IMR-90 (cell line): ENCODE measurements at regions of chr12 and their contacts with region 1.

Region 1: DNA sequence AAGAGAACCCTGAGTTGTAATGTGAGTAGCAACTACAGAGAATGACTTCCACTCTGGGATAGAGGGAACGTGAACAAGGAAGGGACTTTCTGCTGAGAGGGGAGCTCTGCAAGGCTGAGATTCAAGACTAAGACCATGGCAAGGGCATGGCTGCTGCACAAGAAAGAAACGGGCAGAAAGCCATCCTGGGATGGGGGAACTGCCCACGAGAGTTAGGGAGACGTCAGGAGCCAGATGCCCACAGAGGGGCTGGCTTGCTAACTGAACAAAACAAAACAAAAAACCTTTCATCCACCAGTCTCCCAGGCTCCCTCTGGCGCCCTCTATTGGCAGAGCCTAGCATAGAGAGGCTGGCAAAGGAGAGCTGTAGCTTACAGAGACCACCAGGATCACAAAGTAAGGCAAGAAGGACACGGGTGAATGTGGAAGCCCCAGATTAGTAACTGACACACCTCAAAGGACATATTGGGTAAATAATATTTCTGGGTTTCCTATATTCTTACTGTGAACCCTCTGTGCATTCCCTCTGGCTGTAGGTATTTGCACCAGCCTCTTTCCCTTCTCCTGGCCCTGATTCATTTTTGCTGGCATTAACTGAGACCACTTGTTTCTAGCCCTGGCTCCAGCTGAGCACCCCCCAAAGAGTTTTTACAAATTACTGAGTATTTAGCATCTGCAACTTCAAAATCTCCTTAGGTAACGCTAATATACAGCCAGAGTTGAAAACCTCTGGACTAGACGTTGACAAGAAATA is 338.3 kb downstream of the EMP1 start:
- DNase-seq: peak; percentile 23
- ATAC-seq: peak; percentile 82
- H3K4me3 ChIP-seq: peak overlapping the region; percentile 25
- H3K27ac ChIP-seq: no peak overlapping the region
- H3K4me1 ChIP-seq: no peaks in the 10 kb centered on the region
- H3K27me3 ChIP-seq: no peaks in the 10 kb centered on the region
- CTCF ChIP-seq: peak; percentile 76
- POLR2A ChIP-seq: no peak
- RAD21 ChIP-seq: peak; percentile 60

Region 2: GRCh38 chr12:12916135-12916944 is 618.5 kb before region 1 on chr12:
- CTCF ChIA-PET with region 1: no interaction called
- POLR2A ChIA-PET with region 1: no interaction called
- dilution Hi-C with region 1: no loop called
- in situ Hi-C with region 1: loop called (anchors 25 kb)
- intact Hi-C with region 1: no loop called
- DNase-seq: peak; percentile 73
- ATAC-seq: peak; percentile 91
- H3K4me3 ChIP-seq: no peak overlapping the region
- H3K27ac ChIP-seq: no peak overlapping the region
- H3K4me1 ChIP-seq: peaks cover 10% of the 10 kb centered on the region
- H3K27me3 ChIP-seq: no peaks in the 10 kb centered on the region
- CTCF ChIP-seq: peak; percentile 95
- POLR2A ChIP-seq: peak; percentile 56
- RAD21 ChIP-seq: peak; percentile 97

Region 3: GRCh38 chr12:13023811-13024530 is 510.9 kb before region 1 on chr12:
- CTCF ChIA-PET with region 1: no interaction called
- POLR2A ChIA-PET with region 1: no interaction called
- dilution Hi-C with region 1: no loop called
- in situ Hi-C with region 1: loop called (anchors 25 kb)
- intact Hi-C with region 1: loop called (anchors 5 kb)
- DNase-seq: peak; percentile 82
- ATAC-seq: peak; percentile 94
- H3K4me3 ChIP-seq: no peak overlapping the region
- H3K27ac ChIP-seq: no peak overlapping the region
- H3K4me1 ChIP-seq: peaks cover 3% of the 10 kb centered on the region
- H3K27me3 ChIP-seq: peaks cover 2% of the 10 kb centered on the region; the same call in 1 of the 2 replicates
- CTCF ChIP-seq: peak; percentile 80
- POLR2A ChIP-seq: 0 out of 2 replicates have a peak, but pooled peaks have one; percentile 46
- RAD21 ChIP-seq: peak; percentile 85

Region 4: DNA sequence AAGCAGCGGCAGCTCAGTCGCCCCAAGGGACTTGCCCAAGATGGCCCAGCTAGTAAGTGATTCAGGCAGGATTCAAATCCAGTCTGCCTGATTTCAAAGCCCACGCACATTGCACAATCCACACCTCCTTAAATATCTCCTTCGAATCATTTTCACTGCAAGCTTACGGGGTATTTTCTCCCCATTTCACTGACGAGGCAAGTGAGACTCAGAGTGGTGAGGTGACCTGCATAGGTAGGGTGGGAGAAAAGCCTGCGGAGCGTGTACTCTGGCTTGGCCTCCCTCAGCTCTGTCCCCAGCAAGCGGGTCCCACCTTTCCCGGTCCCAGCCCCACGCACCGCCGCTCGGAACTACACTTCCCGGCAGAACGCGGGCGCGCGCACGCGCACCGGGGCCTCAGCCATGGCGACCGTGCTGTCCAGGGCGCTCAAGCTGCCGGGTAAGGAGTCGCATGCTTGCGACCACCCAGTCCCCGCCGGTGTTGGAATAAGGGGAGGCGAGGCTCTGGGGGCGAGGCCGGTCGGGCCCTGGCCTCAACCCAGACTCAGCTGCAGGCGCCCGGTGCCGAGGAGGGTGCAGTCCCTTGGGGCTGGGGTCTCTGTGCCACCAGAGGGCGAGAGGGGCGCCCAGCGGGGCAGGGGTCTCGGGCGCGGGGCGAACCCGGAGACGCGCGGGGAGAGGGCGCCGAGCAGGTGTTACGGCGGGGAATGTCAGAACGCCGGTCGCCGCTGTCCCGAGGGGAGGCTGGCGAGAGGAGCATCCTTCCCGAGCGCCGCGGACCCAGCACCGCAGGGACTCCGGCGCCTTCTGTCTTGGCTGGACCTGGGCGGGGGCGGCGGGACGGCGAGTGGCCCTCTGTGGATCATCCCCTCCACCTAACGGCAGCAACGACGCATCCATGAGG is 490.6 kb before region 1 on chr12 and contains the start of gene FAM234B:
- CTCF ChIA-PET with region 1: no interaction called
- POLR2A ChIA-PET with region 1: no interaction called
- dilution Hi-C with region 1: no loop called
- in situ Hi-C with region 1: loop called (anchors 25 kb)
- intact Hi-C with region 1: no loop called
- DNase-seq: peak; percentile 62
- ATAC-seq: peak; percentile 99
- H3K4me3 ChIP-seq: peak within 1 kb of the TSS; percentile 95
- H3K27ac ChIP-seq: peak within 1 kb of the TSS; percentile 50
- H3K4me1 ChIP-seq: no peaks in the 10 kb centered on the region
- H3K27me3 ChIP-seq: no peaks in the 10 kb centered on the region
- CTCF ChIP-seq: no peak
- POLR2A ChIP-seq: no peak
- RAD21 ChIP-seq: no peak
- total RNA-seq, gene FAM234B: 6.7 and 8.6 TPM in 2 replicates

Region 5: DNA sequence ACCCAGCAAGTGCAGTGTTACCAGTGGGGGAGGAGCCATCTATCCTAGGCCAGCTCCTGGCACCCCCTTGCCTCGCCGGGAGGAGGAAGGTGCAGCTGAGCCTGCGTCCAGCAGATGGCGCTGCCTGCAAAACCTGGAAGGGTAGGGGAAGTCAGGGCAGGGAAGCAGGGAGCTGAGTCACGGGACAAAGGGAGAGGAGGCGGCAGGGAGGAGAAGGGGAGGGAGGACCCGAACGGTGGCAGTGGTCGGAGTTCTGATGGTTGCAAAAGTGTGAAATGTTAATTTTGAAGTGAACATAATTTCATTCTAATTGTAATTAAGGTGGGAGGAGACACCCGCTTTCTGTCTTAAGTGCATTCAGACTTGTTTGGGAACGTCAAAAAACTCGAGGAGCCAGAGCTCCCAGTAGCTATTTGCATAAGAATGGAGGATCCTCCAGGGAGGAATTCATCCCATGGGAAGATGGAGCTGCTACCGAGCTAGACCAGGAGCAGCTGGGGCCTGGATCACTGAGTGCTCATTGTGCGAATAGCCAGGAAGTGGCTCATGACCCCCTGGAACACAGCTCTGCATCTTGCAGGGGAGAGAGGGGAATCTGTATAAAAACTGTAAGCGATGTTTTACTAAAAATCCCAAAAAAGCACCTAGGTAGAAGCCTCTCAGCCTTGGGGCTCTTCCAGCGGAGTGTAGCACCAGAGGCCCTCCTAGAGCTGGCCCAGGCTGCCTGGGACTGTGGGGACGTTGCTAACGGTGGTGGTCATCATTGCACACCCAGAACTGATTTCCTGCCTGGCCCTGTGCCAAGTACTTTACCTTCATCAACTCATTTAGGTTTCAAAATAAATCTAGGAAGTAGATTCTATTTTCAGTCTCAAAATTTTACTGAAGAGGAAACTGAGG is 278.8 kb before region 1 on chr12:
- CTCF ChIA-PET with region 1: interaction called, 18 read pairs
- POLR2A ChIA-PET with region 1: no interaction called
- dilution Hi-C with region 1: no loop called
- in situ Hi-C with region 1: no loop called
- intact Hi-C with region 1: loop called (anchors 2 kb)
- DNase-seq: peak; percentile 92
- ATAC-seq: peak; percentile 100
- H3K4me3 ChIP-seq: peak overlapping the region; percentile 33
- H3K27ac ChIP-seq: no peak overlapping the region
- H3K4me1 ChIP-seq: peaks cover 5% of the 10 kb centered on the region
- H3K27me3 ChIP-seq: 0 out of 2 replicates have a peak, but pooled peaks cover 2% of the 10 kb centered on the region
- CTCF ChIP-seq: peak; percentile 98
- POLR2A ChIP-seq: no peak
- RAD21 ChIP-seq: peak; percentile 85

Region 6: DNA sequence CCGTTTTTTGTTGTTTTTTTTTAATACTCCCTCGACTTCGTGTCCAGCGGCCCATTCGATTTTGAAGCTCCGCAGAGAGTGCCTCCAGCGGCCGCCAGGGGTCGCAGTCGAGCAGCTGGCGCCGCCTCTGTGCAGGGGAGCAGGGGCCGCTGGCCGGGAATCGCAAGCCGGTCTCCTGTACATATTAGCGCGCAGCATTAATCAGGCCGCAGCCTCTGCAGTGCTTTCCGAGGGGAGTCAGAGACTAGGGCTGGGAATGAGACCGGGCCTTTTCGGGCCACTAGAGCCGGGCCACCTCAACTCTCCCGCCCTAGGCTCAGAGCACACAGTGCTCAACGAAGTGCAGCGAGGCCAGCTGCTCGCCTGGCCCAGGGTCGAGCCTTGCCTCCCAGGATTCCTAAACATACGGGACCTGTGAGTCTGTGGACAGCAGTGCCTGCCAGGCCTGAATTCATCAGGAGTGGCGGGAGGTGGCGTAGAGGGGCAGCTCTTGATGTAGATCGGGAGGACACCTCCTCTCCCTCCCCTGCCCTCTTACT is 256.5 kb before region 1 on chr12:
- CTCF ChIA-PET with region 1: interaction called, 7 read pairs
- POLR2A ChIA-PET with region 1: no interaction called
- dilution Hi-C with region 1: no loop called
- in situ Hi-C with region 1: loop called (anchors 25 kb)
- intact Hi-C with region 1: loop called (anchors 1 kb)
- DNase-seq: peak; percentile 58
- ATAC-seq: peak; percentile 99
- H3K4me3 ChIP-seq: no peak overlapping the region
- H3K27ac ChIP-seq: no peak overlapping the region
- H3K4me1 ChIP-seq: no peaks in the 10 kb centered on the region
- H3K27me3 ChIP-seq: peaks cover 58% of the 10 kb centered on the region
- CTCF ChIP-seq: peak; percentile 92
- POLR2A ChIP-seq: no peak
- RAD21 ChIP-seq: peak; percentile 74

Region 7: GRCh38 chr12:13546231-13546630 is 11.4 kb after region 1 on chr12:
- CTCF ChIA-PET with region 1: interaction called, 16 read pairs
- POLR2A ChIA-PET with region 1: no interaction called
- dilution Hi-C with region 1: no loop called
- in situ Hi-C with region 1: no loop called
- intact Hi-C with region 1: no loop called
- DNase-seq: no peak
- ATAC-seq: no peak
- H3K4me3 ChIP-seq: no peak overlapping the region
- H3K27ac ChIP-seq: no peak overlapping the region
- H3K4me1 ChIP-seq: no peaks in the 10 kb centered on the region
- H3K27me3 ChIP-seq: no peaks in the 10 kb centered on the region
- CTCF ChIP-seq: no peak
- POLR2A ChIP-seq: no peak
- RAD21 ChIP-seq: no peak

Region 8: GRCh38 chr12:13670285-13670866 is 135.6 kb after region 1 on chr12:
- CTCF ChIA-PET with region 1: no interaction called
- POLR2A ChIA-PET with region 1: no interaction called
- dilution Hi-C with region 1: no loop called
- in situ Hi-C with region 1: no loop called
- intact Hi-C with region 1: no loop called
- DNase-seq: no peak
- ATAC-seq: no peak
- H3K4me3 ChIP-seq: no peak overlapping the region
- H3K27ac ChIP-seq: no peak overlapping the region
- H3K4me1 ChIP-seq: no peaks in the 10 kb centered on the region
- H3K27me3 ChIP-seq: no peaks in the 10 kb centered on the region
- CTCF ChIP-seq: no peak
- POLR2A ChIP-seq: no peak
- RAD21 ChIP-seq: no peak